MCF 10A (cell line): ENCODE measurements at regions of chr6 and their contacts with region 1.

Region 1: GRCh38 chr6:143940011-143940597 is 68.0 kb downstream of the PLAGL1 start:
- DNase-seq: peak; percentile 73
- H3K4me3 Mint-ChIP-seq: no peak overlapping the region
- H3K27ac Mint-ChIP-seq: no peak overlapping the region
- H3K4me1 Mint-ChIP-seq: peaks cover 4% of the 10 kb centered on the region
- H3K27me3 Mint-ChIP-seq: no peaks in the 10 kb centered on the region
- CTCF ChIP-seq: peak; percentile 79

Region 2: DNA sequence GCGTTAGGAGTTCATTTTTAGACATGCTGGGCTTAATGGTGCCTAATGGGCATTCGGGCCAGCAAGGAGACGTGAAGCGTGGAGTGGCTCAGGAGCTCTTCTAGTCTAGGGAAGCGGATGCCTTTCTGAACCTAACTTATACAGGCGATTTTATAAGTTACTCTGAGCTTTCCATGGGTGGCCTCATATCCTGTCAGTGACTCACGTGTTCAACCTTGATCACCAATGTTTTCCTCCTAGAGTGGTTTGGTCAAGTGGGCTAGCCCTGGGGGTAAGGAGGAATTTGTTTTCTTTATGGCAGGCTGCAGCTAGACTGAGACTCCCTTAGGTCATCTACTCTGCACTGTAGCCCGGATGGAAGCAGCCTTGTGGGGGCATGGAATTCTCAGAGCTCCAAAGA is 15.9 kb after region 1 on chr6:
- CTCF ChIA-PET with region 1: interaction called, 27 read pairs
- POLR2A ChIA-PET with region 1: no interaction called
- intact Hi-C with region 1: no loop called
- DNase-seq: no peak
- H3K4me3 Mint-ChIP-seq: no peak overlapping the region
- H3K27ac Mint-ChIP-seq: no peak overlapping the region
- H3K4me1 Mint-ChIP-seq: no peaks in the 10 kb centered on the region
- H3K27me3 Mint-ChIP-seq: no peaks in the 10 kb centered on the region
- CTCF ChIP-seq: no peak

Region 3: DNA sequence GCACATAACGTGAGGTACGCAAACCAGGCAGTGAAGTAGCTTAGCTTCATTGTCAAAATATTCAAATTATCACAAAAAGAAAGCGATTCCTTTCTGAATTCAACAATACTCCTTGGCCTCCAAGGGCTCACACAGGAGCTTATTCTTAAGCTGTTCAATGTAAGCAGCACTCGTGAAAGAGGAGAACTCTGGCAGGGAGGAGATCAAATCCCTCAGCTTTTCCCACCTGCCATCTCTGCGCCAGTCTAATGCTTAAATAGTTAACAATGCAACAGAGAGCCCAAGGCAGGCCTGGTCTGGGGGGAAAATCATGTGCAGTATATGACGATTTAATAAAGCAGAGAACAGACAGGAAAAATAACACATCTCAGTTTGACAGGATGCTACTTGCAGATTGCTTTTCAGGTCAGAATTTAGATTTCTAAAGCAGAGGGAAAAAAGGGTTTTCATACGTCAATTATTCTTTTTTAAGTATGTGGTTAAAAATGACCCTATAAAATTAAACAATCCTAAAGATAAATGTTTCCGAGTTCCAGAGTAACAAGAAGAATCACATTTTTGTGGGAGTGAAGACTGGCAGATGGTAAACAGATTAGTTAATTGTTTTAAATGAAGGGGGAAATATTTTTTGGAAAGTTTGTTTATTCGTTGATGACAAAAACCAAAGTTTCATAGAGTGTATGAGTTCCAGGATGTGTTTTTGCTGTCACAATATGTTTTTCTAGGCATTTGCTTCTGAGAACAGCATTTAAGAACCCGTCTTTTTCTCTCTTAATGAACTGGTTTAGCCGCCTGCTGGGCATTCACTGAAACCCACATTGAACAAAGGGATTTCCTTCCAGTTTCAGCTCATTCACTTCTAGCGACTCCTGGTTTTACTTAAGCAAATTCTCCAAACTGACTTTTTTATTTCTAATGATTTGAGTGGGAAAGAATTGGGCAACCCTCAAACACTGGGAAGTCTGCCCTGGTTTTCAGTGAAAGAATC is 22.1 kb after region 1 on chr6:
- CTCF ChIA-PET with region 1: interaction called, 22 read pairs
- POLR2A ChIA-PET with region 1: no interaction called
- intact Hi-C with region 1: no loop called
- DNase-seq: peak; percentile 11
- H3K4me3 Mint-ChIP-seq: no peak overlapping the region
- H3K27ac Mint-ChIP-seq: no peak overlapping the region
- H3K4me1 Mint-ChIP-seq: no peaks in the 10 kb centered on the region
- H3K27me3 Mint-ChIP-seq: no peaks in the 10 kb centered on the region
- CTCF ChIP-seq: peak; percentile 3

Region 4: DNA sequence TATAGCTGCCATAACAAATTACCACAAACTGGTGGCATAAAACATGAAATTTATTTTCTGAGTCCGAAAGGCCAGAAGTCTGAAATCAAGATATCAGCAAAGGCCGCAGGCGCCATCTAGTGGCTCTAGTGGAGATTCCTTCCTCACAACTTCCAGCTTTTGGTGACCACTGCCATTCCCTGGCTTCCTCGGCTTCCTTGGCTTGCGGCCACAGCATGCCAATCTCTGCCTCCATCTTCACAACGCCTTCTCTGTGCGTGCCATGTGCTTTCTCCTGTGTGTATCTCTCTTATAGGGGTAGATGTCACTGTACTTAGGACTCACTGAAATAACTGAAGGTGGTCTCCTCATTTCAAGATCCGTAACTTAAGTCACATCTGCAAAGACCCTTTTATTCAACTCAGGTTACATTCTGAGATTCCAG is 73.4 kb after region 1 on chr6:
- CTCF ChIA-PET with region 1: interaction called, 75 read pairs
- POLR2A ChIA-PET with region 1: interaction called, 9 read pairs
- intact Hi-C with region 1: loop called (anchors 1 kb)
- DNase-seq: peak; percentile 90
- H3K4me3 Mint-ChIP-seq: no peak overlapping the region
- H3K27ac Mint-ChIP-seq: no peak overlapping the region
- H3K4me1 Mint-ChIP-seq: no peaks in the 10 kb centered on the region
- H3K27me3 Mint-ChIP-seq: peaks cover 13% of the 10 kb centered on the region
- CTCF ChIP-seq: peak; percentile 94